Endothelial cell of umbilical vein (primary cell): ENCODE measurements at regions of chr5 and their contacts with region 1.

Region 1: GRCh38 chr5:147483961-147484707 is 25.7 kb downstream of the DPYSL3 start:
- DNase-seq: peak; percentile 99
- H3K4me3 ChIP-seq: no peak overlapping the region
- H3K27ac ChIP-seq: peak overlapping the region; percentile 98
- H3K4me1 ChIP-seq: peaks cover 84% of the 10 kb centered on the region
- H3K27me3 ChIP-seq: no peaks in the 10 kb centered on the region
- CTCF ChIP-seq: no peak
- POLR2A ChIP-seq: no peak

Region 2: DNA sequence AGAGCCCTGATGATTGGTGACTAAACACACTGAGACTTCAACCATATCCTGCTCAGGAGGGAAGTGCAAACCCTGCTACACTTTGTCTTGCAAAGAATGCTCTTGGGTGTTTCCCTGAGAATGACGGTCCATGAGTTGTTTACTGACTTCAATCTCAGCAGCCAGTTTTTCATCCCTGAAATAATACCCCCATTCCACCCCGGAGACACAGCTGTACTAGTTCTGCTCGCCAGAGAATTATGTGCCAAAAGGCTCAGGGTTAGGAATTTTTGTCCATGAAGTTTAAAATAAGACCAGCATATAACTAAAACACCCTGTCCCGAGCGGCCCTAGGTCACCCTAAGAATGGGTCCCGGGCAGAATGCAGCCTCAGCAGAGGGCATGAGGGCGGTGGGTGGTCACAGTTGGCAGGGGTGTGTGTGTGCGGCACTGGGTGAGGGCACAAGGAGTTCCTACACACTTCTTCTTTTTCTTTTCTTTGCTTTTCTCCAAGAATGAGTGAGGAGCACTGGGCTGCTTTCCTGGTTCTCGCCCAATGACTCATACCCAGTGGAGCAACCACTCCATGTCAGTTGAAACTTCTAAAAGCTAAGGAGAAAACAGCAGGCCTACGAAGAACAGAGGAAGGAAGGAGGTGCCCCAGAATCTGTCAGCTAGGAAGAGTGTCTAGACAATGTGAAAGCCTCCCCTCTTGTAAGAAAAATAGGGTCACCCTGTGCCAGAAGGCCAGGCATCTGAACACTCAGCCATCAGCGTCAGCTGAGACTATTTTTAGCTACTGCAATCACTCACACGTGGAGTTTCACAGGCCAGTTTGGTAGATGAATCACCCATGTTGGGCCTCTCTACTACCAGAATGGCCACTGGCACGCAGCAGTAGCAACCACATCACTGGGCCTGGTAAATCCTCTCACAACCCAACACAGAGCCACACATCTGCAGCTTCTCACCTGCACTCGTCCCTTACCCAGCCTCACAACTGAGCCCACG is 80.2 kb before region 1 on chr5:
- CTCF ChIA-PET with region 1: no interaction called
- POLR2A ChIA-PET with region 1: no interaction called
- dilution Hi-C with region 1: no loop called
- intact Hi-C with region 1: loop called (anchors 1 kb)
- DNase-seq: peak; percentile 96
- H3K4me3 ChIP-seq: no peak overlapping the region
- H3K27ac ChIP-seq: peak overlapping the region; percentile 95
- H3K4me1 ChIP-seq: peaks cover 25% of the 10 kb centered on the region
- H3K27me3 ChIP-seq: no peaks in the 10 kb centered on the region
- CTCF ChIP-seq: no peak
- POLR2A ChIP-seq: no peak

Region 3: DNA sequence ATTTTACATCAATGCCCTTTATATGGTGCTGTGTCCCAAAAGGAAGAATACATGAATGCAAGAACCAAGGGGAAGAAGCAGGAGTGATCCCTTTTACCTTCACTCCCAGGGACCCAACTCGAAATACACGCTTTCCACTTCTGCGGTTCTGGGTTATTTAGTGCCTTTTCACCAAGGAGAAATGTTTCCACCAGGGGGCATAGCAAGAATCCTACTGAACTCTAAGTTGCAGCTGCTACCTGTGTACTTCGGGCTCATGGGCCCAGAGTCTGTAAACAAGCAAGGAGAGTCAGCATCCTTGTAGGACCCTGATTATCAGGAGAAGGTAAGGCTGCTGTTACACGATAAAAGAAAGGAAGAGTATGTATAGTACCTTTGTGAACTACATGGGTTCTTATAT is 19.9 kb before region 1 on chr5:
- CTCF ChIA-PET with region 1: interaction called, 18 read pairs
- POLR2A ChIA-PET with region 1: no interaction called
- dilution Hi-C with region 1: no loop called
- intact Hi-C with region 1: loop called (anchors 1 kb)
- DNase-seq: peak; percentile 81
- H3K4me3 ChIP-seq: no peak overlapping the region
- H3K27ac ChIP-seq: no peak overlapping the region
- H3K4me1 ChIP-seq: peaks cover 10% of the 10 kb centered on the region
- H3K27me3 ChIP-seq: no peaks in the 10 kb centered on the region
- CTCF ChIP-seq: peak; percentile 55 to 61
- POLR2A ChIP-seq: no peak

Region 4: GRCh38 chr5:147509710-147510651 is 25.8 kb after region 1 on chr5 and contains the start of gene DPYSL3:
- CTCF ChIA-PET with region 1: interaction called, 21 read pairs
- POLR2A ChIA-PET with region 1: no interaction called
- dilution Hi-C with region 1: no loop called
- intact Hi-C with region 1: loop called (anchors 1 kb)
- DNase-seq: peak; percentile 90
- H3K4me3 ChIP-seq: peak within 1 kb of the TSS; percentile 46 to 85 (median 79)
- H3K27ac ChIP-seq: peak within 1 kb of the TSS; percentile 67
- H3K4me1 ChIP-seq: peaks cover 26% of the 10 kb centered on the region
- H3K27me3 ChIP-seq: no peaks in the 10 kb centered on the region
- CTCF ChIP-seq: peak; percentile 25 to 55
- POLR2A ChIP-seq: peak; percentile 60
- total RNA-seq, gene DPYSL3: 142 and 146 TPM in 2 replicates

Region 5: GRCh38 chr5:148383564-148384379 is 899.6 kb after region 1 on chr5 and contains the start of gene FBXO38:
- CTCF ChIA-PET with region 1: no interaction called
- POLR2A ChIA-PET with region 1: no interaction called
- dilution Hi-C with region 1: no loop called
- intact Hi-C with region 1: loop called (anchors 10 kb)
- DNase-seq: peak; percentile 97
- H3K4me3 ChIP-seq: peak within 1 kb of the TSS; percentile 66 to 97 (median 69)
- H3K27ac ChIP-seq: peak within 1 kb of the TSS; percentile 97
- H3K4me1 ChIP-seq: peaks cover 58% of the 10 kb centered on the region
- H3K27me3 ChIP-seq: no peaks in the 10 kb centered on the region
- CTCF ChIP-seq: no peak
- POLR2A ChIP-seq: peak; percentile 79
- total RNA-seq, gene FBXO38: 52.9 and 65.6 TPM in 2 replicates